ENCODE measurements at regions of chr11 and their contacts with region 1.

Region 1: DNA sequence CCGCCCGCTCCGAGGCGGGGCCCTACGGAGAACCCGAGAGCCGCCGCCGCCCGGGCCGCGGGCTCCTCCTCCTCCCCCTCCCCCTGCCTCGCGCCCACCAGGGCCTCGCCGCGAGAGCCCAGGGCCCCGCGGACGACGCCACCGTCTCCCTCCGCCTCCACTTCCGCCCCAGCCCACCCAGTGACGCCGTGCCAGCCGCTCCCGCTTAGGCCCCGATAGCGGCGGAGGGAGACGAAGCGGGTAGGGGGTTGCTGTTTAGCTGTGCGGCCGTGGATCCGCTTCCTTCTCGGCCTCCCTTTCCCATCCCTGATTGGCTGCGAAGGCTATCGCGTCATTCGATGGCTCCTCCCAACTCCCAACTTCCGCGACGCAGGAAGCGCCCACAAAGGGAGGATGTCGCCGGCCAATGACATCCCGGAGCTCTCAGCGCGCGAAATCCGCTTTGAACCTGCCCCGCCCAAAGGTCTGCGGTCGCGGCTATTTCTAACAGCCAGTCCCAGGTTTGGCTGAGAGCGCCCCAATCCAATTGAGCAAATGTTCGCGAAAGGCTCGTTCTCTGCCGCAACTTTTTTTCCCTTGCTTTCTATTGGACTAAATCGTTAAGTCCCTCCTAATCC is at the start of gene FAM76B:
- H3K4me3 Mint-ChIP-seq: peak within 1 kb of the TSS; percentile 99
- H3K27ac Mint-ChIP-seq: peak within 1 kb of the TSS; percentile 100
- H3K4me1 Mint-ChIP-seq: peaks cover 31% of the 10 kb centered on the region
- H3K27me3 Mint-ChIP-seq: no peaks in the 10 kb centered on the region

Region 2: DNA sequence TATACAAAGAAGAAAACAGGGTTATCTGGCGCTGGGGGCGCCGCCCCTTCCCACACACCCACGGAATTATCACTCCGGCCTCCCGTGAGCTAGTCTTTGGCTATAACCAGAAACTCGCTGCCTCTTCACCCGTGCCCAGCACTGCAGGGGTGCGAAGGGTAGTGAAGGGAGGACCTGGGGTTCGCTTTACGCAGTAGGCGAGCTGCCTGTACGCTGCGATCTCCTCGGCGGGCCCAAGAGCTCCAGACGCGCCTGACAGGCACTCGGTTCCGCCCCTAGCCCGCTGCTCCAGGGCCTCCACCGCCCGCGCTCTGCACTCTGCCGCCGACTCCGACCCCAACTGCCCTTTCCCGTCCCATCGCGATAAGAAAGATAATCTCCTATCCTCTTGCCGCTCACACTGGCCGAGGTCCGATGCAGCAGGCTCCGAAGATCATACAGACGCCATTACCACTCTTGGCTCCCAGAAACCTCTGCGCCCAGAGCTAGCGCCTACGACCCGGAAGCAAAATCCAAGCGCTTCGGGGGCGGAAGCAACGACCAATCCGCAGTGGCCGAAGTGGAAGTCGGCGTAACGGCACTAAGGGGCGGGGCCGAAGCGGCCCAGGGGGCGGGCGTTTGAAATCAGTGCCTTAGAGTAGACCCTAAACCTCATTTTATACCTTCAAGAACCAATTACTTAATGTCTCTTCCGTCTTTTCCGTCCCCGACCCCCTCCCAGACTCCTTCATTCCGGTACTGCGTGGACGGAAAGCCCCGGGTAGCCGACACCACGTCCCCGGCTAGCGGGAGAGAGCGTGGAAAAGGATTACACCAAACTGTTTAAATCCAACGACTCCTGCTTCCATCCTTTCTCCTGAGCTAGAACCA is 816.3 kb before region 1 on chr11 and contains the starts of genes CWC15 and KDM4D:
- intact Hi-C with region 1: loop called (anchors 5 kb)
- H3K4me3 Mint-ChIP-seq: peak within 1 kb of the TSS; percentile 97
- H3K27ac Mint-ChIP-seq: peak within 1 kb of the TSS; percentile 97
- H3K4me1 Mint-ChIP-seq: peaks cover 12% of the 10 kb centered on the region
- H3K27me3 Mint-ChIP-seq: peaks cover 7% of the 10 kb centered on the region